A673 (cell line): ENCODE measurements at regions of chr17 and their contacts with region 1.

Region 1: GRCh38 chr17:48678141-48678971 is 44.0 kb downstream of the PRAC1 start:
- DNase-seq: peak; percentile 83
- H3K4me3 ChIP-seq: peak overlapping the region; percentile 39
- H3K27ac ChIP-seq: no peak overlapping the region
- H3K4me1 ChIP-seq: peaks cover 17% of the 10 kb centered on the region
- H3K27me3 ChIP-seq: no peaks in the 10 kb centered on the region
- CTCF ChIP-seq: peak; percentile 99

Region 2: DNA sequence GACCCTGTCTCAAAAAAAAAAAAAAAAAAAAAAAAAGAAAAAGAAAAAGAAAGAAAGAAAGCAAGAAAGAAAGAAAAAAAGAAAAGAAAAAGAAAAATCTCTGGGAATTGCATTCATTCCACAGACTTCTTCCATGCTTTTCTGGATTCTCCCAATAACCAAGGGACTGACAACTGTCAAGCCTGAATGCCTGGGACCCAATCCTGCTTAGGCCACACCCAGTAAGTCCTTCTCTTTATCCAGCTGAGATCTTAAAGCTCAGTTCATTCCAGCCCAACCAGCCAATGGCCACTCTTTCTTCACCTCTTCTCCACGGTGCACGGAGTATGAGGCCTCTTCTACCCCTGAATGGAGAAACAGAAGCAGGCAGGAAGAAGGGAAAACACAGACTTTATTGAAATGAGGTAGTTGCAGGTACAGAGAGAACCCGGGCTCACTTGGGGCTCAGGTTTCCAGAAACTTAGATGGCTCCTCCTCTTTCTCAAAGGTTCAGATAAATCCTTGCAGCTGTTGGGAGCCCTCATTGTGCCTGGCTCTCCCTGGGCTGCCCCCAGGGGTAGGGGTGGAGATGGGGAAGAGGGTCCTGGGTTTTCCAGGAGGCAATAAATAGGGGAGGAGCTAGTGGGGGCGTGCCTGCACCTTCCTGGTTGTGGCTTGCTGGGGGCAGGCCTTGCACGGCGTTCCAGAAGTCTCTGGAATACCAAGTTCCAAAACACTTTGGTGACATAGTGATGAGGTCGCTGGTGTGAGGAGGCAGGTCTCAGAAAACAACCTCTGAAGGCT is 150.0 kb before region 1 on chr17:
- CTCF ChIA-PET with region 1: no interaction called
- POLR2A ChIA-PET with region 1: no interaction called
- intact Hi-C with region 1: no loop called
- DNase-seq: no peak
- H3K4me3 ChIP-seq: no peak overlapping the region
- H3K27ac ChIP-seq: no peak overlapping the region
- H3K4me1 ChIP-seq: no peaks in the 10 kb centered on the region
- H3K27me3 ChIP-seq: no peaks in the 10 kb centered on the region
- CTCF ChIP-seq: no peak

Region 3: DNA sequence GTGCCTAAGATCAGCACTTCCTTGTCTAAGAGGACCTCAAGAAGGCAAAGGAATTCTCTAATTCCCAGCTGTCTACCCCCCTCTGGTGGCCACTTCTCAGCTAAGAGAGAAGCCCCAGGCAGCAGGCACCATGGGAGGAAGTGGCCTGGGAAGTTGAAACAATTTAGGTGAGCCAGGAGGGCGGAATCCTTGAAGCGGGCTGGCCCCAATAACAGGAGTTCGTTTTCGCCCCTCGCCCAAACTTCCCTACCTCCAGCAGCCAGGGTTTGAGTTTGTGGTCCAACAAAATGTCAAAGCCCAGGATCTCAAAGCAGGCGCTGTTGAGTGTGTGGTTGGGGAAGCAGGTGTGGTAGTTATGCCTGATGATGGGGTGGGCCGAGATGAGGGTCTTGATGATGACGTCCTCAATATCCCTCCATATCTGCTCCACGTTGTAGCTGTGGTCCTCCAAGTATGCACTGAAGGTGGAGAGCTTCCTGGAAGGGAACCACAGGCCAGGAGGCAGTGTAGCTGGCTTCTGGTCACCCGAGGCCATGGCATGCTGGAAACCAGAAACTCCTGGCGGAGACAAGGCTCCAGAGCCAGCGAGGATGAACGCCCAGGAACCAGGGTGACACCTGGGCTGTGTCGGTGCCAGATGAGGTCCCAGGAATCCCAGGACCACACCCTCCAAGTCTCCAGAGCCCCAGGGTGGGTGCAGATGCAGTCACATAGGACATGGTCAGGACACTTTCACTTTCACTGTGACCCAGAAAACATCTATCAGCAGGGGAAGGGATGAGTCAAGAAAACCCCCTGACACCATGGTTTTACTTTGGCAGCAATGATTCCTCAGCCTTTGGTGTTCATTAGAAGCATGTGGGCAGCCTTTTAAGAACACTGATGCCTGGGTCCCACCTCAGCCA is 113.0 kb after region 1 on chr17:
- CTCF ChIA-PET with region 1: interaction called, 51 read pairs
- POLR2A ChIA-PET with region 1: no interaction called
- intact Hi-C with region 1: loop called (anchors 1 kb)
- DNase-seq: peak; percentile 94
- H3K4me3 ChIP-seq: no peak overlapping the region
- H3K27ac ChIP-seq: no peak overlapping the region
- H3K4me1 ChIP-seq: peaks cover 9% of the 10 kb centered on the region
- H3K27me3 ChIP-seq: no peaks in the 10 kb centered on the region
- CTCF ChIP-seq: peak; percentile 95

Region 4: DNA sequence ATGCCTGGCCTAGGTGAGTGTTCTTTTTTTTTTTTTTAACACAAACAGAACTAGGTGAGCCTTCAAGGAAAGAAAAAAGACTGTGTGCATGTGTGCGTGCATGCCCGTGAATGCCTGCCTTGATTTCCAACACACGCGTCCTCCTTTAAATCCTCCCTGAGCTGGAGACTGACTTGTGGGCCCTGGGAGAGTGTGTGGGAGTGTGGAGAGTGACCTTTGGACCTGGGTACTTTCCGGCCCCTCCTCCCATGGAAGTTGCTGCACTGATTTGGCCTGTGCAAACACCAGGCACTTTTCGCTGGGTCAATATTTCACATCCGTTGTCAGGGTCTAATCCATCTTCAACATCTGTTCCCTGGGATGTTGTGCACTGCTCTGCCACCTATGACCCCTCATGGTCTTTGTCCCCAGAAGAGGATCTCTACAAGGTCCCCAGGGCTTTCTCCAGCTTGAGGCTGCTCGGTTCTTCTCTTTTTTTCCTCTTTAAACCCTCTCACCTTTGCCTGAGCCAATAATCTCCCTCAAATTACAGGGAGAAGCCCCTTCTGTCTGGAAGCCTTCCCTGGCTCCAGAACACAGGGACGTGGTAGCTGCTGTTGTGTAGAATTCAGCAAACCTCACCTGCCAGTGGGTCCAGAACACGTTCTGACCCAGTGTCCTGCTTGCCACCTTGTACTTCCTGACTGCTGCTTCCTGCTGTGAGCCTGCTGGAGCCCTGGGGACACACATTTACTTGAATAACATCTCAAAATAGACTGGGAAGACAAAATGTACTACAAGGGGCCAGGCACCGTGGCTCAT is 193.4 kb after region 1 on chr17:
- CTCF ChIA-PET with region 1: no interaction called
- POLR2A ChIA-PET with region 1: interaction called, 11 read pairs
- intact Hi-C with region 1: no loop called
- DNase-seq: no peak
- H3K4me3 ChIP-seq: no peak overlapping the region
- H3K27ac ChIP-seq: no peak overlapping the region
- H3K4me1 ChIP-seq: no peaks in the 10 kb centered on the region
- H3K27me3 ChIP-seq: no peaks in the 10 kb centered on the region
- CTCF ChIP-seq: no peak

Region 5: DNA sequence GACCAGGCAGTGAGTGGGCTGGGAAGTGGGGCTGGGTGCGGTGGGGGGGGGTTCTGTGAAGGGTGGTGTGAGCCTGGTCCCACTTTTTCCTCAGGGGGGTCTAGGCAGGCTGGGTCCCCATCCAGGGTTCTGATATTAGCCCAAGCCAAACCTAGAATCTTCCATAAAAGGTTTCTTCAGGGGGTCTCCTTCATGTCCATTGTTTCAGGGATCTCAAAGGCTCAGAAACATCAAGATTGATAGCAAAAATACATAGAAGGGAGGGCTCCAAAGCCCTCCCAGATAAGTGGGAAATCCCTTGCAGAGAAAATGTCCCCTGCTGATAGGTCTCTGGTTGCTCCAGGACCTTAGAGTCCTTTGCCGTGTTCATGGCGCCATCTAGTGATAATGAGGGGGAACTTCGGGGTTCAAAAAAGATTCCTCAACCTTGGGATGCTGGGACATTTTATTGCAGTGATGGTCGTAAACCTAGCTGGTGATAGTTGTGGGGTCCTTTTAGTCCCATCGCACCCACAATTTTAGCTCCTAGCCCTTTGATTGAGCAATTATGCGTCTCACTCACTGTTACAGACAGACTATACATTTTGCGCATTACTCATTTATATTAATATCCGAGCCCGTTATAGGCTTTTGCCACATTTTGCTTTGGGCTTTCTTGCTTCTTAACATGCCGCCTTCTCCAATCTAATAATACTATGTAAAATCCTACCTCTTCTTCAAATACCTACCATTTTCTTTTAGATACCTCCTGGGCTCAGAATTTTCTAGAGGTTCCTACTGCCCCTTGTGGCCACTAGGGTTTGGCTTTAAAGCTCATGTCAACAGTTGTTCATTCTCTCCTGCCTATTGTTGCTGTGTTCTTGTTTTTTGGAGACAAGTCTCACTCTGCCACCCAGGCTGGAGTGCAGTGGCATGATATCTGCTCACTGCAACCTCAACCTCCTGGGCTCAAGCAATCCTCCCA is 353.9 kb after region 1 on chr17:
- CTCF ChIA-PET with region 1: no interaction called
- POLR2A ChIA-PET with region 1: no interaction called
- intact Hi-C with region 1: loop called (anchors 10 kb)
- DNase-seq: peak; percentile 96
- H3K4me3 ChIP-seq: no peak overlapping the region
- H3K27ac ChIP-seq: peak overlapping the region; percentile 76
- H3K4me1 ChIP-seq: peaks cover 61% of the 10 kb centered on the region
- H3K27me3 ChIP-seq: no peaks in the 10 kb centered on the region
- CTCF ChIP-seq: peak; percentile 76